ENCODE measurements at regions of chr11 and their contacts with region 1.

Region 1: GRCh38 chr11:112121981-112122615 is 35.4 kb downstream of the SDHD start:
- DNase-seq: no peak
- ATAC-seq: no peak
- H3K4me3 ChIP-seq: no peak overlapping the region
- H3K27ac ChIP-seq: no peak overlapping the region
- H3K4me1 ChIP-seq: peaks cover 12% of the 10 kb centered on the region
- H3K27me3 ChIP-seq: no peaks in the 10 kb centered on the region
- CTCF ChIP-seq: no peak

Region 2: DNA sequence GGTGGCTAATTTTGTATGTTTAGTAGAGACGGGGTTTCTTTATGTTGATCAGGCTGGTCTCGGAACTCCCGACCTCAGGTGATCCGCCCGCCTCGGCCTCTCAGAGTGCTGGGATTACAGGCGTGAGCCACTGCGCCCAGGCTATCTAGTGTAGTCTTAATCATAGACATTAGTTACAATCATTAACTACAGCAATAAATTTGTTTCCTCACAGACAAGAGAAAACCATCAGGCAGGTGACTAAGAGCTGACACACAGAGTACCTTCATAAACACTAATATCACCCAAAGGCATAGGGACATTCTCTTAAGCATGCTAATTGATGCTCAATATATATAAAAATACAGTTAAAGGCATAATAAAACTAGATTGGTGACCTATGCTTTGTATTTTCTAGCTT is 16.0 kb before region 1 on chr11:
- CTCF ChIA-PET with region 1: no interaction called
- POLR2A ChIA-PET with region 1: interaction called, 11 read pairs
- in situ Hi-C with region 1: no loop called
- intact Hi-C with region 1: no loop called
- DNase-seq: no peak
- ATAC-seq: no peak
- H3K4me3 ChIP-seq: no peak overlapping the region
- H3K27ac ChIP-seq: no peak overlapping the region
- H3K4me1 ChIP-seq: no peaks in the 10 kb centered on the region
- H3K27me3 ChIP-seq: no peaks in the 10 kb centered on the region
- CTCF ChIP-seq: no peak